MCF 10A (cell line): ENCODE measurements at regions of chr5 and their contacts with region 1.

Region 1: DNA sequence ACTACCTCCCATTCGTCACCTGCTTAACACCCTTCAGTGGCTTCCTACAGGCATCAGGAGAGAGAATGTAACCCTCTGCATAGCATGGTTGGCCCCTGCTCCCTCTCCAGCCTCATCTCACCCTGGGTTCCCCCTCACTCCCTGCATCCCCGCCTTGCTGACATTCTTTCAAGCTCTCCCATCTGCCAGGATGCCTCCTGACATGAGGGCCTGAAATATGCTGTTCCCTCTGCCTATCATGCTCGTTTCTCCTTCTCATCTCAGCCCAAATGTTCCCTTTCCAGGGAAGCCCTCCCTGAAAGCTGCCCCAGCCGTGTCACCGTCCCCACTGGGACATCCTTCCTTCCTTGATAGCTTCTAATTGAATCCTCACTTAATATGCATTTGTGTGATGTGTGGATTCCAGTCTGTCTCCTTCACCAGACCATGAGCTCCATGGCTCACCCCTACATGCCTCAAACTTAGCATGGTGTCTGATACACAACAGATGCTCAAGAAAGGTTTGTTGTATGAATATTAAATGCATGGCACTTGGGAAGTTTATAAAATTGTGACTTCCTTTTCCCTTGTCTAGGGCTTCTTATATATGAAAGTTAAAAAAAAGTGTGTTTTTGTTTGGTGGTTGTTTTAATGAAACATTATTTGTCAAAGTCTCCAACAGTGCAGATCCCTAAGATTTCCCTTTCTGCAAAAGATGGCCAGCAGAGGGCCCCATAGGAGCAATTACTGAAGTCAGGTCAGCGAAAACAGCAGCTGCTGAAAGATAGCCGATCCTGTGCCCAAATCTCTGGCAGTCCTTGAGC is 7.3 kb upstream of the C5orf58 start:
- DNase-seq: peak; percentile 83
- H3K4me3 Mint-ChIP-seq: no peak overlapping the region
- H3K27ac Mint-ChIP-seq: no peak overlapping the region
- H3K4me1 Mint-ChIP-seq: no peaks in the 10 kb centered on the region
- H3K27me3 Mint-ChIP-seq: no peaks in the 10 kb centered on the region
- CTCF ChIP-seq: peak; percentile 90

Region 2: GRCh38 chr5:169164481-169164925 is 1061.0 kb before region 1 on chr5:
- CTCF ChIA-PET with region 1: no interaction called
- POLR2A ChIA-PET with region 1: no interaction called
- intact Hi-C with region 1: no loop called
- DNase-seq: peak; percentile 99
- H3K4me3 Mint-ChIP-seq: no peak overlapping the region
- H3K27ac Mint-ChIP-seq: no peak overlapping the region
- H3K4me1 Mint-ChIP-seq: peaks cover 11% of the 10 kb centered on the region
- H3K27me3 Mint-ChIP-seq: no peaks in the 10 kb centered on the region
- CTCF ChIP-seq: no peak

Region 3: GRCh38 chr5:170247363-170247762 is 21.8 kb after region 1 on chr5:
- CTCF ChIA-PET with region 1: interaction called, 14 read pairs
- POLR2A ChIA-PET with region 1: interaction called, 4 read pairs
- intact Hi-C with region 1: no loop called
- DNase-seq: no peak
- H3K4me3 Mint-ChIP-seq: no peak overlapping the region
- H3K27ac Mint-ChIP-seq: no peak overlapping the region
- H3K4me1 Mint-ChIP-seq: peaks cover 5% of the 10 kb centered on the region
- H3K27me3 Mint-ChIP-seq: no peaks in the 10 kb centered on the region
- CTCF ChIP-seq: no peak

Region 4: GRCh38 chr5:170267431-170268152 is 42.1 kb after region 1 on chr5:
- CTCF ChIA-PET with region 1: interaction called, 82 read pairs
- POLR2A ChIA-PET with region 1: no interaction called
- intact Hi-C with region 1: loop called (anchors 2 kb)
- DNase-seq: peak; percentile 90
- H3K4me3 Mint-ChIP-seq: no peak overlapping the region
- H3K27ac Mint-ChIP-seq: no peak overlapping the region
- H3K4me1 Mint-ChIP-seq: peaks cover 6% of the 10 kb centered on the region
- H3K27me3 Mint-ChIP-seq: peaks cover 47% of the 10 kb centered on the region
- CTCF ChIP-seq: peak; percentile 91

Region 5: DNA sequence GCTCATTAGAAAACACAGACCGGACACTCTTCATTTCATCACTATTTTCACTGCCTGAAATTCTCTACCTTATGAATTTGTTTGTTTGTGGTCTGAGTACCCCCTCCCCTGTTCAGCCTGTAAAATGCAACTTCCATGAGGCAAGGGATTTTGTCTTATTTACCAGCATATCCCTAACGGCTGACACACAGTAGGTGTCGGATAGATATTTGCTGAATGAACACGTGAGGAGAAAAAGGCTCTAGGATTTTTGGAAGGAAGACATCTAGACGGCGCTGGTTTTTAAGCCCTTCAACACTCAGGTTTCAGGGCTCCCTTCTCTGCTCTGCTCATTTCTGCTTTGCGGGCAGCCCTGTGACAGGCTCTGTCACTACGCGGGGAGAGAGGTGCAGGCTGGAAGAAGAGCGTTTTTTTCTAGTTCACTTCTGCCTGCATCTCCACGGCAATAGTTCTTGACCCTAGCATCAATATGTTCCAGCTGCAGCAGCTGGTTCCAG is 122.7 kb after region 1 on chr5:
- CTCF ChIA-PET with region 1: interaction called, 9 read pairs
- POLR2A ChIA-PET with region 1: no interaction called
- intact Hi-C with region 1: loop called (anchors 1 kb)
- DNase-seq: no peak
- H3K4me3 Mint-ChIP-seq: no peak overlapping the region
- H3K27ac Mint-ChIP-seq: no peak overlapping the region
- H3K4me1 Mint-ChIP-seq: no peaks in the 10 kb centered on the region
- H3K27me3 Mint-ChIP-seq: peaks cover 28% of the 10 kb centered on the region
- CTCF ChIP-seq: peak; percentile 19

Region 6: GRCh38 chr5:170420780-170421412 is 195.4 kb after region 1 on chr5:
- CTCF ChIA-PET with region 1: interaction called, 465 read pairs
- POLR2A ChIA-PET with region 1: interaction called, 5 read pairs
- intact Hi-C with region 1: loop called (anchors 1 kb)
- DNase-seq: peak; percentile 82
- H3K4me3 Mint-ChIP-seq: no peak overlapping the region
- H3K27ac Mint-ChIP-seq: no peak overlapping the region
- H3K4me1 Mint-ChIP-seq: no peaks in the 10 kb centered on the region
- H3K27me3 Mint-ChIP-seq: peaks cover 45% of the 10 kb centered on the region
- CTCF ChIP-seq: peak; percentile 78

Region 7: GRCh38 chr5:170623576-170624181 is 398.2 kb after region 1 on chr5:
- CTCF ChIA-PET with region 1: interaction called, 11 read pairs
- POLR2A ChIA-PET with region 1: no interaction called
- intact Hi-C with region 1: loop called (anchors 1 kb)
- DNase-seq: peak; percentile 78
- H3K4me3 Mint-ChIP-seq: no peak overlapping the region
- H3K27ac Mint-ChIP-seq: no peak overlapping the region
- H3K4me1 Mint-ChIP-seq: no peaks in the 10 kb centered on the region
- H3K27me3 Mint-ChIP-seq: peaks cover 27% of the 10 kb centered on the region
- CTCF ChIP-seq: peak; percentile 97